Right cardiac atrium (tissue), 5 donors: ENCODE measurements at regions of chr5 and their contacts with region 1.

Region 1: DNA sequence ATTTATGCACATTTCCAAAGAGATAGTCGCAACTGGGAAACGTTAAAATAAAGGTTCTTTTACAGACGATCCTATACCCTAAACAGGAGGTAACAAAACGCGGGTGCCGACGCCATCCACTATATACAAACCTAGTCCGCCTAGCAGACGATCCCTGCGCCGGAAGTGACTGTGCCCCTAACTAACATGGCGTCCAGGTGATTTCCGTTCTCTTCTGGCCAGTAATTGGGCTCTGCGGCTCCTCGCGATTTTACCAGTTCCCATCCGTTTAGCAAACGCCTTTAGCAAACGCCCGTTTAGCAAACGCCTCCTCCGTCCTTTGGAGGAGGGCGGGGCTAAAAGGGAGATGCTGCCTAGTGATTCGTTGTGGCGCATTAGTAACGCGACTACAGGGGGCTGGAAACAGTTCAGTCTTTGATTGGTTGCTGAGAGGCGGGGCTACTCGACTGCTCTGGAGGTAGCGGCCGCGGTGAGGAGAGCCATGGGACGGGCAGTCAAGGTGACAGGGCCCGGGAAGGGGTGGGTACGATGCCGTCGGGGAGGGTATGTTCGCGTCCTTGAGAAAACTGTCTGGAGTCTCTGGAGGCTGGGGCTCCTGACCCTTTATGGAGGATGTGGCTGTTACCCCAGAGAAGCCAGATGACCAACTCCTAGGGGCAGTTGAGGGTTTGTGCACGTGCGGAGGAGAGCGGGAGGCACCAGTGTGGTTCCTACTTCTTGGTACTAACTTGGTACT is at the start of gene LYRM7:
- DNase-seq: peak; percentile 96 to 98 (median 96)
- ATAC-seq: peak; percentile 99
- H3K4me3 ChIP-seq: peak within 1 kb of the TSS; percentile 86
- H3K27ac ChIP-seq: peak within 1 kb of the TSS; percentile 65
- H3K4me1 ChIP-seq: peaks cover 3% of the 10 kb centered on the region
- H3K27me3 ChIP-seq: no peaks in the 10 kb centered on the region
- total RNA-seq, gene LYRM7: 14.5 to 26.5 (median 21.4) TPM

Region 2: GRCh38 chr5:130805648-130806047 is 365.1 kb before region 1 on chr5:
- intact Hi-C with region 1: no loop called
- DNase-seq: no peak
- ATAC-seq: no peak
- H3K4me3 ChIP-seq: no peak overlapping the region
- H3K27ac ChIP-seq: no peak overlapping the region
- H3K4me1 ChIP-seq: no peaks in the 10 kb centered on the region
- H3K27me3 ChIP-seq: no peaks in the 10 kb centered on the region

Region 3: DNA sequence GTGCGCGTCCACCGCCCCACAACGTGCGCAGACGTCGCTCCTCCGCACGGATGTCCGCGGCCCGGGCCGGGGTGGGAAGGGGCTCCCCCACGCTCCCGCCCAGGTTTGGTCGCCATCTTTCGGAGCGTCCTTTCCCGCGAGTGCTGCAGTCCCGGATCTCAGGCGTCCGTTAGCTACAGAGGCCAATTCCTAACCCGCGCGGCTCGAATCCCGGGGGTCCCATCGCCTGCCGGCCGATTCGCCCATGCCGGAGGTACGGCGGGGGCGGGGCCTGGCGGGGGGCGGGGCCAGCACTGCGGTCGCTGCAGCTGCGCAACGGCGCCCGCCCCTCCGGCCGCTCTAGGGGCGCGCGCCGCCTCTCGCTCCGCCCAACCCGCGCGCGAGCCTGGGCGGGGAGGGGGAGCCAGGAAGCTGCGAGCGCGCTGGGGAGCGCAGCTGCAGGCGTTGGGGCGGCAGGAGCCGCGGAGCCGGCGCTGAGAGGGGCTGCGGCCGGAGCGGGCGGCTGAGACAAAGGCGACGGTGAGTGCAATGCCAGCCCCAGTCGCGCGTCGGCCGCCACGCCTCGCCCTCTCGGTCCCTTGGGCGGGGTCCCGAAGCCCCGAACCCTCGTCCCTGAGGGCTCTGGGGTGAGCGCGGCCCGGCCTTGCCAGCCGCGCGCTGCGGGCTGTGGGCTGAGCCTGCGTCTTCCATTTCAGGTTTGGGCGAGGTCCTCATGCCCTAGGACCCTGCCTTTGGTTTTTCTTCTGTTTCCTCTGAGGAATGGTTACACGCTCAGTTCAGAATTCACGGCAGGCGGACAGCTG is 93.1 kb after region 1 on chr5 and contains the start of gene CDC42SE2:
- intact Hi-C with region 1: loop called (anchors 10 kb)
- DNase-seq: peak; percentile 85 to 95 (median 95)
- ATAC-seq: peak; percentile 100
- H3K4me3 ChIP-seq: peak within 1 kb of the TSS; percentile 96
- H3K27ac ChIP-seq: peak within 1 kb of the TSS; percentile 65
- H3K4me1 ChIP-seq: no peaks in the 10 kb centered on the region
- H3K27me3 ChIP-seq: no peaks in the 10 kb centered on the region
- total RNA-seq, gene CDC42SE2: 12.1 to 14.2 (median 13.2) TPM

Region 4: GRCh38 chr5:131417240-131417869 is 246.6 kb after region 1 on chr5:
- intact Hi-C with region 1: loop called in 1 of 4 experiments (anchors 5 kb)
- DNase-seq: peak; percentile 76 to 90 (median 82)
- ATAC-seq: peak; percentile 33 to 40
- H3K4me3 ChIP-seq: no peak overlapping the region
- H3K27ac ChIP-seq: no peak overlapping the region
- H3K4me1 ChIP-seq: no peaks in the 10 kb centered on the region
- H3K27me3 ChIP-seq: no peaks in the 10 kb centered on the region